Activated naive CD4-positive, alpha-beta T cell treated with anti-CD3 and anti-CD28 coated beads, Interleukin-2, amount 10 ng/mL, durations not matched to agents 7 days and 5 days (primary cell): ENCODE measurements at regions of chr7 and their contacts with region 1.

Region 1: DNA sequence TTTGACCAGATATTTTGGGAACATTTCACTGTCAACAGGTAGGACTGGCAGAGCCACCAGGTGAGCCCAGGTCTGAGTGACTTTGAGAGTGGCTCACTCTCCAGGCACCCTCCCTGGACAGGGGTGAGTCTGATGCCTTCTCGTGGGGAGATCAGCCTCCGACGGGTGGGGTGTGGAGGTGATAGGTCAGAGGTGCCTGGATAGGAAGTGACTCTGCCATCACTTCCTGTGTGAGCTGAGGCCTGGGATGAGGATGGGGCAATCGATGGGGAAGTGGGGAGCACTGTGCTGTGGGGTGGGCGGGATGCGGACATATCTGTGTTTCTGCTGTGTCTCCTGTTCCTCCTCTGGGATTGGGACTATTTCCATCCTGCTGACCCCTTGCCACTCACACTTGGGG is 34.6 kb downstream of the IFT22 start:
- DNase-seq: no peak
- H3K4me3 Mint-ChIP-seq: no peak overlapping the region
- H3K27ac Mint-ChIP-seq: no peak overlapping the region
- H3K4me1 Mint-ChIP-seq: peaks cover 17% of the 10 kb centered on the region
- H3K27me3 Mint-ChIP-seq: peaks cover 56% of the 10 kb centered on the region

Region 2: DNA sequence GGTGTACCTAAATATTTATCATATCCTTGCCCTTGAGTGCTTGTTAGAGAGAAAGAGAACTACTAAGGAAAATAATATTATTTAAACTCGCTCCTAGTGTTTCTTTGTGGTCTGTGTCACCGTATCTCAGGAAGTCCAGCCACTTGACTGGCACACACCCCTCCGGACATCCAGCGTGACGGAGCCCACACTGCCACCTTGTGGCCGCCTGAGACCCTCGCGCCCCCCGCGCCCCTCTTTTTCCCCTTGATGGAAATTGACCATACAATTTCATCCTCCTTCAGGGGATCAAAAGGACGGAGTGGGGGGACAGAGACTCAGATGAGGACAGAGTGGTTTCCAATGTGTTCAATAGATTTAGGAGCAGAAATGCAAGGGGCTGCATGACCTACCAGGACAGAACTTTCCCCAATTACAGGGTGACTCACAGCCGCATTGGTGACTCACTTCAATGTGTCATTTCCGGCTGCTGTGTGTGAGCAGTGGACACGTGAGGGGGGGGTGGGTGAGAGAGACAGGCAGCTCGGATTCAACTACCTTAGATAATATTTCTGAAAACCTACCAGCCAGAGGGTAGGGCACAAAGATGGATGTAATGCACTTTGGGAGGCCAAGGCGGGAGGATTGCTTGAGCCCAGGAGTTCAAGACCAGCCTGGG is 148.7 kb before region 1 on chr7:
- CTCF ChIA-PET with region 1: interaction called, 56 read pairs
- DNase-seq: peak; percentile 84
- H3K4me3 Mint-ChIP-seq: no peak overlapping the region
- H3K27ac Mint-ChIP-seq: peak overlapping the region; percentile 4
- H3K4me1 Mint-ChIP-seq: peaks cover 39% of the 10 kb centered on the region
- H3K27me3 Mint-ChIP-seq: peaks cover 67% of the 10 kb centered on the region

Region 3: GRCh38 chr7:101169838-101170551 is 117.0 kb before region 1 on chr7:
- CTCF ChIA-PET with region 1: interaction called, 10 read pairs
- DNase-seq: peak; percentile 87
- H3K4me3 Mint-ChIP-seq: no peak overlapping the region
- H3K27ac Mint-ChIP-seq: no peak overlapping the region
- H3K4me1 Mint-ChIP-seq: peaks cover 73% of the 10 kb centered on the region
- H3K27me3 Mint-ChIP-seq: peaks cover 100% of the 10 kb centered on the region

Region 4: GRCh38 chr7:101197991-101198390 is 89.0 kb before region 1 on chr7:
- CTCF ChIA-PET with region 1: interaction called, 34 read pairs
- DNase-seq: no peak
- H3K4me3 Mint-ChIP-seq: no peak overlapping the region
- H3K27ac Mint-ChIP-seq: no peak overlapping the region
- H3K4me1 Mint-ChIP-seq: peaks cover 16% of the 10 kb centered on the region
- H3K27me3 Mint-ChIP-seq: peaks cover 70% of the 10 kb centered on the region

Region 5: GRCh38 chr7:101235050-101235449 is 52.0 kb before region 1 on chr7:
- CTCF ChIA-PET with region 1: interaction called, 13 read pairs
- DNase-seq: no peak
- H3K4me3 Mint-ChIP-seq: no peak overlapping the region
- H3K27ac Mint-ChIP-seq: no peak overlapping the region
- H3K4me1 Mint-ChIP-seq: peaks cover 4% of the 10 kb centered on the region
- H3K27me3 Mint-ChIP-seq: no peaks in the 10 kb centered on the region

Region 6: DNA sequence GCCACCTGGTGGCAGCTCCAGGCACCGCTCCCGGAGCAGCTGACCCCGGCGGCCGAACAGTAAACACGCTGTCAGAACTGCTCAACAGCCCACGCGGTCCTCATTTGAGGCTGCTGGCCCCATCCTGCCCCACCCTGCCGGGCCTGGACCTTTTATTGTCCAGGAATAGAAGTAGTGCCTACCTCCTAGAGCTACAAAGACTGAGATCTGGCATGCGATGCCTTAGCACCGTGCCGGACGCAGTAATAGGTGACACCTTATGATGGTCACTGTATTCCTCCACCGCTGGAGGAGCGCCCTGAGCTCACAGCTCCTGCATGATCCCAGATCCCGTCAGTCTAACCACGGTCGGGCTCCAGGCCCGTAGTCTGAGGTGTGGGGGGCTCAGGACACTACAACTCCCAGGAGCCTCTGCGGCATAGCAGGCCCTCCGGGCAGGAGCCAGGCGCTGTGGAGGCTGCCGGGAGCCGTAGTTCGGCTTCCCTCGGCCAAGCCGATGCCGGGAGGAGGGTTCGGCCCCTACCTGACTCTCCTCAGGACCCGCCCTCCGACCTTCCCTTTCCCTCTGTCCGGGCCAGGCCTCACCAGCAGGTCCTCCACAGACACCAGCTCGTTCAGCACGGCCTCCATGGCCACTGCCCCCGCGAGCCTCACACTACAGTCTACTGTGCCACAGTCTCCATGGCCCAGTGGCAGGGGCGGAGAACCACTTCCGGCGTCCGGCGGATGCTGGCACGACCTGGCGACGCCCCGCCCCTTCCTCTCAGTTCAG is 42.5 kb before region 1 on chr7 and contains the start of gene FIS1:
- CTCF ChIA-PET with region 1: interaction called, 20 read pairs
- DNase-seq: peak; percentile 96
- H3K4me3 Mint-ChIP-seq: peak within 1 kb of the TSS; percentile 92
- H3K27ac Mint-ChIP-seq: peak within 1 kb of the TSS; percentile 97
- H3K4me1 Mint-ChIP-seq: peaks cover 50% of the 10 kb centered on the region
- H3K27me3 Mint-ChIP-seq: no peaks in the 10 kb centered on the region

Region 7: DNA sequence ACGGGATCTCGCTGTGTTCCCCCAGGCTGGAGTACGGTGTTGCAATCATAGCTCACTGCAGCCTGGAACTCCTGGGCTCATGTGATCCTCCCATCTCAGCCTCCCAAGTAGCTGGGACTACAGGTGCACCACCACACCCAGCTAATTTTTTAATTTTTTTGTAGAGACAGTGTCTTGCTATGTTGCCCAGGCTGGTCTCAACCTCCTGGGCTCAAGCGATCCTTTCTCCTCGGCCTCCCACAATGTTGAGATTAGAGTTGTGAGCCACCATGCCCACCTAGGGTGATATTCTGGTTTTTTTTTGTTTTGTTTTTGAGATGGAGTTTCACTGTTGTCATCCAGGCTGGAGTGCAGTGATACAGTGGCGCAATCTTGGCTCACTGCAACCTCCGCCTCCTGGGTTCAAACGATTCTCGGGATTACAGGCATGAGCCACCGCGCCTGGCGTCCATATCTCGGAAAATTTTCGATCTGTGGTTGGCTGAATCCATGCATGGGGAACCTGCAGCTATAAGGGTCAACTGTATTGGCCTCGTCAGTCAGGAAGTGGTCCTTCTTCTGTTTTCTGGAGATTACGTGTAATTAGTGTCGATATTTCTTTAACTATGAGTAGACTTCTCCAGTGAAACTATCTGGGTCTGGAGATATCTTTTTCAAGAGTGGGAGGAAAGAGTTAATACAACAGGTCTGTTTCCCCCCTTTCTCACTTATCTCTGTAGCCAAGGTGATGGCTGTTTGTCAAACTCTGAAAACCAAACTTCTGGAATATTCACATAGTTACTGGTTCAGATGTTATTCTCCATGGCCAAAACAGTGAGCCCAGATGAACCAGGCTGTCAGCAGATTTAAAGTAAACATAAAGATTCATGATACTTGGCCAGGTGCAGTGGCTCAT is 21.2 kb before region 1 on chr7:
- CTCF ChIA-PET with region 1: interaction called, 11 read pairs
- DNase-seq: no peak
- H3K4me3 Mint-ChIP-seq: no peak overlapping the region
- H3K27ac Mint-ChIP-seq: no peak overlapping the region
- H3K4me1 Mint-ChIP-seq: no peaks in the 10 kb centered on the region
- H3K27me3 Mint-ChIP-seq: peaks cover 49% of the 10 kb centered on the region

Region 8: GRCh38 chr7:101465576-101466196 is 178.7 kb after region 1 on chr7:
- CTCF ChIA-PET with region 1: no interaction called
- DNase-seq: peak; percentile 57
- H3K4me3 Mint-ChIP-seq: peak overlapping the region; percentile 21
- H3K27ac Mint-ChIP-seq: peak overlapping the region; percentile 88
- H3K4me1 Mint-ChIP-seq: peaks cover 22% of the 10 kb centered on the region
- H3K27me3 Mint-ChIP-seq: peaks cover 32% of the 10 kb centered on the region